Panc1 (cell line): ENCODE measurements at regions of chr15 and their contacts with region 1.

Region 1: DNA sequence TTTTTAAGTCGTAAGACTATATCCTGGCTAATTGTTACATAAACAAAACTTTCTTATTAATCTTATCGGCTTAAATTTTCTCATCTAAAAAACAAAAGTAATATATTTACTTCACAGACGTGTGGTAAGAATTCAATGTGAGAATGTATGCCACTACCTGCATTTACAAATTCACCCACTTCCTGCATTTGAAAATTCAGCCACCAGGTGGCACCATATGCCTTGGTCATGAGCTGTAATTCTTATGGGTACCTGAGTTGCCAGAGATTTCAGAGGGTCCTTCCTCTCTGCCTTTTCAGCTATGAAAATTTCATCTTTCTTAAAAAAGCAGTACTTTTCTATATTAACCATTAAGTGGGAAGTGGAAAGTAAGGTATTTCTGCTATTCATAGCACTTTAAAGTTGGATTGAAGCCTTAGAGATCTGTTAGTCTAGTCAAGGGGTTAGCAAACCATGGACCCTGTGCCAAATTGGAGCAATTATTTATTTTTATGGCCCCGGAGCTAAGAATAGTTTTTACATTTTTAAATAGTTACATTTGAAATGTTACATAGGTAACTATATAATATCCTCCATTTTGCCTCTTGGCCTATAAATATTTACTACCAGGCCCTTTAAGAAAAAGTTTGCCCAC is 127.8 kb downstream of the HCN4 start:
- DNase-seq: no peak
- ATAC-seq: no peak; the same call in 1 of the 2 replicates
- H3K4me3 ChIP-seq: no peak overlapping the region
- H3K27ac ChIP-seq: no peak overlapping the region
- H3K4me1 ChIP-seq: no peaks in the 10 kb centered on the region
- H3K27me3 ChIP-seq: peaks cover 4% of the 10 kb centered on the region; the same call in 1 of the 2 replicates
- CTCF ChIP-seq: peak; percentile 83

Region 2: GRCh38 chr15:73127301-73127936 is 113.6 kb before region 1 on chr15:
- CTCF ChIA-PET with region 1: no interaction called
- POLR2A ChIA-PET with region 1: no interaction called
- in situ Hi-C with region 1: no loop called
- intact Hi-C with region 1: no loop called
- DNase-seq: peak; percentile 32
- ATAC-seq: peak; percentile 77
- H3K4me3 ChIP-seq: no peak overlapping the region
- H3K27ac ChIP-seq: no peak overlapping the region
- H3K4me1 ChIP-seq: no peaks in the 10 kb centered on the region
- H3K27me3 ChIP-seq: peaks cover 5% of the 10 kb centered on the region; the same call in 1 of the 2 replicates
- CTCF ChIP-seq: peak; percentile 86

Region 3: DNA sequence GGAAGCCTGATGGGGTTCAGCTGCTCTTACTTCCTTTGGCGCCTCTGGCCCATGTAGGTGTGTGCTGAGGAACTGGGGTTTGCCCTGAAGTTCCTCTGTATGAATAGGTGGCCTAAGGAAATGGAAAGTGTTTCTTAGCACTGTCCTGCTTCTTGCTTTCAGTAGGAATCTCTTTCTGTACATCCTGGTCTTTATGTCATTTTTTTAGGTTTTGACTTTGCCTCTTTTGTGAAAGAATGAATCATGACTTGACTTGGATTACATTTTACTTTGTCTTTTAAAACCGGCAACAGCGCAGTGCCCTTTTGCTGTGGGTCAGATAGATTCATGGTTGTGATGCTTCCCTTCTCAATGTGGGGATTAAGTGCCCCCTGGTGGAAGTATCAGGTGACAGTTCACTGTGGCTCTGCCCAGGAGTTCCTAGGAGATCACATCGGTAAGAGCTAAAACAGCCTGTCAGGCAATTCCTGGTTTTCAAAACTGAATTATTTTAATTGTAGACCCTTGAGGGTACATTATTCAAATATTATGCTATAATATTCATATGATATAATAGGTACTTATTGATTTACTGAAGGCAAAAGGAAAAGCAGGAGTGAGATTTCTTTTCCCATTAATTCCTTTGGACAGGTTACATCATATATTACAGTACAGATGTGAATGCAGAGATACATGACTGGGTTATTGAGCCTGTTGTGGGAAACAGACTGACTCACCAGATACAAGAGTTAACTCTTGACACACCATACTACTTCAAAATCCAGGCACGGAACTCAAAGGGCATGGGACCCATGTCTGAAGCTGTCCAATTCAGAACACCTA is 32.4 kb after region 1 on chr15:
- CTCF ChIA-PET with region 1: interaction called, 17 read pairs
- POLR2A ChIA-PET with region 1: no interaction called
- in situ Hi-C with region 1: no loop called
- intact Hi-C with region 1: loop called (anchors 1 kb)
- DNase-seq: peak; percentile 45
- ATAC-seq: peak; percentile 96; the same call in 1 of the 2 replicates
- H3K4me3 ChIP-seq: no peak overlapping the region
- H3K27ac ChIP-seq: no peak overlapping the region
- H3K4me1 ChIP-seq: no peaks in the 10 kb centered on the region
- H3K27me3 ChIP-seq: 0 out of 2 replicates have a peak, but pooled peaks cover 2% of the 10 kb centered on the region
- CTCF ChIP-seq: peak; percentile 87

Region 4: DNA sequence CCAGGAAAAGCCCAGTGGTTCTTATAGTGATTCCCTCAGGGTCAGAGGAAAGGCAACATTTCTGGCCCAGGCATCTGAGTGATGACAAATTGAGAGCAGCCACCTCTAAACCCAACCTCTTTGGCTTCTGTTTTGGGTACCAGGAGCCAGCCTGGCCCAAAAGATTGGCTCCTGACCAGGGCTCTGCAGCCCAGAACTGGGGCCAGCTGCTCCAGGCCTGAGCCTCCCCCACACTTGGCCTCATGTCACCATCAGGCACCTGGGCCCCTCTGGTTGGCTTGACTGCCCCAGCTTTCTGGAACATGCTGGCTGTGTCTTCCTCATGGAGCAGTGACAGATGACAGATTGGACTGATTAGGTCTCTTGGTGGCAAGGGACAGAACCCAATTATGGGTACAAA is 153.8 kb after region 1 on chr15:
- CTCF ChIA-PET with region 1: no interaction called
- POLR2A ChIA-PET with region 1: no interaction called
- in situ Hi-C with region 1: no loop called
- intact Hi-C with region 1: no loop called
- DNase-seq: no peak
- ATAC-seq: no peak
- H3K4me3 ChIP-seq: no peak overlapping the region
- H3K27ac ChIP-seq: no peak overlapping the region
- H3K4me1 ChIP-seq: no peaks in the 10 kb centered on the region
- H3K27me3 ChIP-seq: no peaks in the 10 kb centered on the region; the same call in 1 of the 2 replicates
- CTCF ChIP-seq: no peak

Region 5: DNA sequence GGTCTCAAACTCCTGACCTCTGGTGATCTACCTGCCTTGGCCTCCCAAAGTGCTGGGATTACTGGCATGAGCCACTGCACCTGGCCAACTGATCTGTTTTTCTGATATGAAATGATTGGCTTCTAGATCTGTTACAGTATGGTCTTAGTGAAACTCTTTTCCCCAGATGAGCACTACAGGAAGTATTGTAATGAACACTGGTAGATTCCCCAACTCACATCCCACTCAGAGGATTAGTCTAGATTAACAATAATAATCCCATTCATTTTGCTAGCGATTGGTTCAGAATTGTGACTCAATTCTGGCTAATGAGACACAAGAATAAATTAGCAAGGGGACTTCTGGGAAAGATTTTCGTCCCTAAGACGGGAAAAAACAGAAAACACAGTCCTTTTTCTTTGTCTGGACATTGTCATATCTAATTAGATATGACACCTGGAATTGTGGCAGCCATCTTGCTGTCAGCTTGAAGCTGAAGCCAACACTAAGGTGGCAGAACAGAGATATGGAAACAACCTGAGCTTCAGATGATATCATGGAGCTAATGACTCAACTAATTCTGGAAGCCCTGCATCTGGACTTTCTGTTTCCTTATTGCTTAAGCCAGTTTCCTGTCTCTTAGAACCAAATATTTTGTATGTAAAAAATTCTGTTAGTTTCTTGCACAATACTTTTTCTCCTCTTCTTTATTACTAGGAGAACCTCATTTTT is 409.6 kb after region 1 on chr15:
- CTCF ChIA-PET with region 1: no interaction called
- POLR2A ChIA-PET with region 1: interaction called, 11 read pairs
- in situ Hi-C with region 1: no loop called
- intact Hi-C with region 1: no loop called
- DNase-seq: no peak
- ATAC-seq: no peak
- H3K4me3 ChIP-seq: no peak overlapping the region
- H3K27ac ChIP-seq: no peak overlapping the region
- H3K4me1 ChIP-seq: no peaks in the 10 kb centered on the region
- H3K27me3 ChIP-seq: no peaks in the 10 kb centered on the region; the same call in 1 of the 2 replicates
- CTCF ChIP-seq: no peak